A673 (cell line): ENCODE measurements at regions of chr17 and their contacts with region 1.

Region 1: DNA sequence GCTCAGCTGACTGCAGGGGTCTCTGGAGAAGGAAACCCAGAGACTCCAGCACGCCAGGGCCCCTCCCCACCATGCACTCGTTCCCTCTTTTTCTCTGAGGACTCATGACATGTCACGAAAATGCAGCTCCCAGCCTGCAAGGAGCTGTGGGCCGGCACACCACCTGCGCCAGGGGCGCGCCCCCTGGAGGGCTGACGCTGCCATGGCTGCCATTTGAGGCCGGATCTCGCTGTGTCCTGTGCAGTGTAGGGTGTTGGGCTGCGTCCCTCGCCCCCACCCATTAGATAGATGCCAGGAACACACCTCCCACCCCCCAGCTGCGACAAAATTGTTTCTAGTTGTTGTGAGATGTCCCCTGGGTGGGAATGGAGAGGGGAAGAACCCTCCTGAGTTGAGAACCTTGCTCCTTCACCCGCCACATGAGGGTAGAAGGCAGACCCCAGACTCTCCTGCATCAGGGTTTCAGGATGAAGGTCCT is 8.2 kb downstream of the SYNGR2 start:
- DNase-seq: peak; percentile 75
- H3K4me3 ChIP-seq: no peak overlapping the region
- H3K27ac ChIP-seq: no peak overlapping the region
- H3K4me1 ChIP-seq: peaks cover 8% of the 10 kb centered on the region
- H3K27me3 ChIP-seq: no peaks in the 10 kb centered on the region
- CTCF ChIP-seq: peak; percentile 97

Region 2: DNA sequence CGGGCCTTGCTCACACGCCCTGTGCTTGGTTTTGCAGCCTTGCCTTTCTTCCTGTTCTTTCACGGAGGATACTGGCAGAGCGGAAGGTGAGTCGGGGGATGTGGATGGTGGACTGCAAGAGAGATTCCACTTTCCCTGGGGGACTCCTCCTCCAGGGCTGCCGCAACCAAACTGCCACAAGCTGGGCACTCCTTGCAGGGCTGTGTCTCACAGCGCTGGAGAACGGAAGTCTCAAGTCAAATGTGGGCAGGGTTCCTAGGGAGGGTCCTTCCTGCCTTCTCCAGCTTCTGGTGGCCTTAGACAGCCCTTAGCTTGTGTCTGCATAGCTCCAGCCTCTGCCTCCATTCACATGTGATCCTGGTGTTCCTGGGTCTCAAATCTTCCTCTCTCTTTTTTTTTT is 26.1 kb after region 1 on chr17:
- CTCF ChIA-PET with region 1: interaction called, 16 read pairs
- POLR2A ChIA-PET with region 1: no interaction called
- intact Hi-C with region 1: no loop called
- DNase-seq: no peak
- H3K4me3 ChIP-seq: no peak overlapping the region
- H3K27ac ChIP-seq: no peak overlapping the region
- H3K4me1 ChIP-seq: no peaks in the 10 kb centered on the region
- H3K27me3 ChIP-seq: no peaks in the 10 kb centered on the region
- CTCF ChIP-seq: no peak